Calu3 (cell line): ENCODE measurements at regions of chr20 and their contacts with region 1.

Region 1: DNA sequence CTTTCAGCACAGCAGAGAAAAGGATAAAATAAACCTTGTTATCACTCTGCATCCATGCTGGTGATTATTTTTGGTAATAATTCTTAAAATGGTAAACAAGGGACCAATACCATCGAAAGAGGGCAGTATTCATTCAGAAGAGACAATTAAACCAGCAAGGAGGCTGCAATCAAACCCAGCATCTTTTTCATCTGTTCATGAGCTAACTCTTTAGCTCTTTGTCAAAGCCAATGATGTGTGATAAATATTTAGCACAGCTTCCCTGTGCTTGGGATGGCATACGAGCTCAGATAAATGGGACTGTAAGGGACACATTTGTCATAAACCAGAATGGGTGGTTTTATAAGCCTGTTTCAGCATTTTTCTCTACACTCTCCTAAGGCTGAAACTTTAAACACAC is 34.4 kb downstream of the CDH26 start:
- DNase-seq: no peak
- H3K4me3 Mint-ChIP-seq: no peak overlapping the region
- H3K27ac Mint-ChIP-seq: no peak overlapping the region
- H3K4me1 Mint-ChIP-seq: peaks cover 31% of the 10 kb centered on the region
- H3K27me3 Mint-ChIP-seq: no peaks in the 10 kb centered on the region
- CTCF ChIP-seq: peak; percentile 49

Region 2: DNA sequence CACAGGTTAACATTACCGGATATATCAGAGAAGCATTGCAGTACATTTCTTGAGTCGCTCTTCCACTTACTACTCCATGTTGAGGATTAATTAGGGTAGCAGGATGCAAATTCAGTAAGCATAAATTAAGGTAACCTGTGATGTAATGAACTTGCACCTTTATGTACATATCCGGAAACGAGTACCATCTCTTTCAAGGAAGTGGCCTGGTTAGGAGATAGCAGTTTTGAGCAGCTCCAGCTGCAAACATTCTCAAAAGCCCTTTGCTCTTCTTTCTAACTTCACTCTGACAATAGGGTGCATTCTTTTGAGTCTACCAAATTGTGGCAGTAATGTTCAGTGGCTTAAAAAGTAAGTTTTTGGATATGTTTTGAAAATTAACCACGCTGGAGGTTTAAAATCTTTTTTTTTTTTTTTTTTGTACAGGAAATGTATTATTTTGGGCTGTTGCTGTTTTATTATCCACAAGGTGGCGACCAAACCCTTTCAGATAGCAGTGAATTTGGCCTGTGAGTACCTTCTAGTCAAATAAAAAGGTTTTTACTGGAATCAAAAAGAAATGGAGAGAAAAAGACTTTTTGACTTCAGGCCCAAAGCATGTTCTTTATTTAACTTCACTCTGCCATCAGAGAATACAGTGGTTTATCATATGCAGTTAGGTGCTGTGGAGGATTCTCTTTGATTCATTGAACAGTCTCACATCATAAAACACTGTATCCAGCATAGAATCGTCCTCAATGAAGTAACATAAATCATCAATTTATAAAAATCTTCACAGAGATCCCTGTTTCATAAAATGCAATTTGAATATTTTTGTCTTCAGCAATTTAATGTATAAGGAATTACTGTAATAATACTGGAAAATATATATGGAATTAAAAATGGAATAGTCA is 43.5 kb before region 1 on chr20:
- CTCF ChIA-PET with region 1: interaction called, 3 read pairs
- intact Hi-C with region 1: loop called (anchors 2 kb)
- DNase-seq: peak; percentile 48
- H3K4me3 Mint-ChIP-seq: no peak overlapping the region
- H3K27ac Mint-ChIP-seq: no peak overlapping the region
- H3K4me1 Mint-ChIP-seq: peaks cover 14% of the 10 kb centered on the region
- H3K27me3 Mint-ChIP-seq: no peaks in the 10 kb centered on the region
- CTCF ChIP-seq: peak; percentile 57

Region 3: DNA sequence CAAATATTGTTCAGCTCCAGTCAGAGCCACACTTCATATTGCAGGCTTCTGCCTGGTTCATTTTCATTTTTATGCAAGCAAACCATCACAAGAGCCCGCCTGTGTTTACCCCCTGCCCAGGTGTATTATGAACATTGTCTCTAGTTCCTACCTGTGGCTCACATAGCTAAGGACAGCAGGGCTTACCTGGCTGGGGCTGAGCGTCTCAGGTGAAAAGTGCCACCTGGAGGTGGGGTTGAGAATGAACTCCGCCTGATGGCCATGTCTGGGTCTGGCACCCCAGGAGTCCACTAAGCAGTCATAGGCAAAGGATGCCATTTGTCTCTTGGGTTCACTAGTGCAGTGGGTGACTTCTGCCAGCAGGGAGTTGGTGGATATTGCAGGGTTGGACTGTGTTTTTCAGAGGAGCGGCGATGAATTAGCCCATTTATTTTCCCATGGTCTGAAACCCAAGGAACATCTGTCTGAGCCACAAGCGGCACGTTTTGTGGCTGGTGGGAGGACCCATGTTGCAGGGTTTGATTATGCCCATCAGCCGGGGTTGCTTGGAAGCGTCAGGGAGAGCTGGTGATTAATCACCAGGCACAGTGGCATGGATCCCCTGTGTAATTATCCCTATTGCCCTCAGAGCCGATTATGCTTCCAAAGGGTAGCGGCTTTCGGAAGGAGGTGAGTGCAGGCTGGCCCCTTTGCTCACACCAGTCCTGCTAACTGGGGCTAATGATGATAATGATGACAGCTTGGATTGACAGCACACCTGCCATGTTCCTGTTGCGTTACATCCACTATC is 57.8 kb after region 1 on chr20:
- CTCF ChIA-PET with region 1: interaction called, 25 read pairs
- intact Hi-C with region 1: loop called (anchors 1 kb)
- DNase-seq: peak; percentile 83
- H3K4me3 Mint-ChIP-seq: no peak overlapping the region
- H3K27ac Mint-ChIP-seq: no peak overlapping the region
- H3K4me1 Mint-ChIP-seq: peaks cover 21% of the 10 kb centered on the region
- H3K27me3 Mint-ChIP-seq: peaks cover 38% of the 10 kb centered on the region
- CTCF ChIP-seq: peak; percentile 79

Region 4: DNA sequence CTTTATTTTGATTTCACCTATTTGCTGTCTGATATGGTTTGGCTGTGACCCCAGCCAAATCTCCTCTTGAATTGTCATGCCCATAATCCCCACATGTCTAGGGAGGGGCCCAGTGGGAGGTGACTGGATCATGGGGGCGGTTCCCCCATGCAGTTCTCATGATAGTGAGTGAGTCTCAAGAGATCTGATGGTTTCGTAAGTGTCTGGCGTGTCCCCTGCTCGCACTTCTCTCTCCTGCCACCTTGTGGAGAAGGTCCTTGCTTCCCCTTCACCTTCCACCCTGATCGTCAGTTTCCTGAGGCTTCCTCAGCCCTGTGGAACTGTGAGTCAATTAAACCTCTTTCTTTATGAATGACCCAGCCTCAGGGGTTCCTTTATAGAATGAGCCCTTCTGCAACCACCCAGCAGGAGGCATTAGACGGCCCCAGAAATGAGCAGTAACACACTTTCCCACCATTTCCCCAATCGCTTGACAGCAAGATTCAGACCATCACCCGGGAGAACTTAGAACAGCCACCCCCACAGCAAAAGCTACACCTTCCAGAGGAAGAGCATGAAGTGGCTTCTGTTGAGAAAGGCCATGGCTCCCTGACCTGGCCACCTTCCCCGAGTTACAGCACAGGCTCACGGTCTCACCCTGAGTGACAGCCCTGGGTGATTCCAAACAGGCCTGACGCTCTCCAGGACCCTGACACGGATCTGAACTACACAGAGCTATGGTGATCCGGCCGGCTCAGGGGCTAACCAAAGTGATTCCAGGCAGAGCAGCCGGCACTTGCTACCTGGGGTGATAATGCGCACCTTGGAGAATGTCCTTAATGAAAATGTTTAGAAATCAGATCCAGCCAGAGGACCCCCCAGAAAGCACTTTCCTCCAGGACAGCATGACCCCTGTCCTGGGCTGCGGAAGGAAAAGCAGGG is 1128.3 kb after region 1 on chr20:
- CTCF ChIA-PET with region 1: no interaction called
- intact Hi-C with region 1: loop called (anchors 1 kb)
- DNase-seq: peak; percentile 66
- H3K4me3 Mint-ChIP-seq: no peak overlapping the region
- H3K27ac Mint-ChIP-seq: no peak overlapping the region
- H3K4me1 Mint-ChIP-seq: no peaks in the 10 kb centered on the region
- H3K27me3 Mint-ChIP-seq: peaks cover 12% of the 10 kb centered on the region
- CTCF ChIP-seq: peak; percentile 62

Region 5: GRCh38 chr20:61234803-61235113 is 1242.2 kb after region 1 on chr20:
- CTCF ChIA-PET with region 1: no interaction called
- intact Hi-C with region 1: loop called (anchors 2 kb)
- DNase-seq: no peak
- H3K4me3 Mint-ChIP-seq: no peak overlapping the region
- H3K27ac Mint-ChIP-seq: no peak overlapping the region
- H3K4me1 Mint-ChIP-seq: no peaks in the 10 kb centered on the region
- H3K27me3 Mint-ChIP-seq: peaks cover 46% of the 10 kb centered on the region
- CTCF ChIP-seq: no peak